Right ventricle myocardium inferior (tissue), 1 donor: ENCODE measurements at regions of chr15 and their contacts with region 1.

Region 1: DNA sequence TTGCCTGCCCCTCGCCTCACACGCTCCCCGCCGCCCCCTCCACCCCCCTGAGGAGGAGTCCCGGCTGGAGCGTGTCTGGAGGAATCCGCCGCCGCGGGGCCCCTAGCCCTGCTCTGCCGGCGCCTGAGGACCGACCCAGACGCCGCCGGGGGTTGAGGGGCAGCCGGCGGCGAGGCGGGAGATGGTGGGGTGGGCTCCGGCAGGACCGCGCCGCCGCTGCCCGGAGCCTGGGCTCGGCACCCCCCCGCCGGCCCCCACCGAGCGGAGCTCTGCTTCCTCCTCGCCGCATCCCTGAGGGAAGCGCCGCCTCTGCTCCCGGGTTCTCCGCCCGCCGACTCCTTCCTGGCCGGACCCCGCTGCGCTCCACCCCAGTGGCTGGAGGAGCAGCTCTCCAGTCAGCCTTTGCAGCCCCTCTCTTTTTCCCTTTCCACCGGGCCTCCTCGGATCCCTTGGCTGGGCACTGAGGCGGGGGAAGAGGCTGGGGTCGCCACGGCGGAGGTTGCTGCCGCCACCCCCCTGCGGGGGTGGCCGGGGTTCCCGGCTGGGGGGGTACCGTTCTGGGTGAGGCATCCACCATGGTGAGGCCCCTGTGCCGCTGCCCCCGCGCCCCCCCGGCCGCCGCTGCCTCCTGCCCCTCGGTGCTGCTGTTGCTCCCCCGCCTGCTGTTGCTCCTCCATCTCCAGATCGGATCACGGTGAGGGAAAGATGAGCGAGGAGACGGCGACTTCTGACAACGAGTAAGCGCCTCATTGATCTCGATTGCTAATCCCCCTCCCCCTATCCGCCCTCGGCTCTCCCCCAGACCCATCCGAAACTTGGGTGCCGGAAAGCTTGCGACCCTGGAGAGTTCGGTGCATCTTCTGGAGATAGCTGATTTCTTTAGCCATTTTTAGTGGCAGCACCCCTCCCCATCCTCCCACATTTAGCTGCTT is at the start of gene SPRED1:
- DNase-seq: peak; percentile 87
- ATAC-seq: peak; percentile 78
- total RNA-seq, gene SPRED1: 9.9 TPM

Region 2: GRCh38 chr15:37907136-37907535 is 345.6 kb before region 1 on chr15:
- intact Hi-C with region 1: no loop called
- DNase-seq: no peak
- ATAC-seq: no peak

Region 3: DNA sequence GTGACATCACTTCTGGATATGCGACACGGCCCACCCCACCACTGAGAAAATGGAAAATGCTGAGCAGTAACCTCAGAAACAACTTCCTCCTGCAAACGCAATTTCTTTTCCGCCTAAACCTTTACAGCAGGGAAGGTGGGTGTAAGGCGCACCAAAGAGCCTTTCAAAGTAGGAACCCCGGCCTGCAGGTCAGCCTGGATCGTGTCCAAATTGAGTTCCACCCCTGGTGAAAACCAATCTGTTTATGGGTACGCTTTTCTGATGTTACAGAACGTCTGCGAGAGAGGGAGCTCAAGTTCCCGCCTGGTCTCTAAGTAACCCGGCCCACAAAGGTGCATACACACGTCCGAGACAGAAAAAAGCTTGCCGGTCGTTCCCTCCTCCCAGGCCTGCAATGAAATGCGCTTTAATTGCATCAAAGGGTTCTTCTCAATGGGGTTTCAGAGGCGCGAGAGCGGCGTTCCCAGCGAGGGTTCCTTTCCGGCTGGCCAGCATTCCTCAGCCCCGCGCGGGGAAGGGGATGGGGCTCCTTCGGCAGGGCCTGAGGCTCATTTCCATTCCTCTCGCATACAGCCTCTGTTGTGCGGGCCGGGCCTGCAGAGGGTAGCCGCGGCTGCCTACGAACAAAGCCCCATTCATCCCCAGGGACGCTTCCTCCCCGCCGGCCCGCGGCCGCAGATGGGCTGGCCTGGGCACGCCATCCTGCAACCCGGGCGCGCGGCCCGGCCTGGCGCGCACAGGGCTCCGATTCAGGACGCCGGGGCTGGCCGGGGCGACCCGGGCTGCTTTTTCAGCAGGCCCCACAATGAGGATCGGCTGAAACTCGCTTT is 180.2 kb before region 1 on chr15:
- intact Hi-C with region 1: loop called (anchors 1 kb)
- DNase-seq: peak; percentile 86
- ATAC-seq: peak; percentile 91

Region 4: DNA sequence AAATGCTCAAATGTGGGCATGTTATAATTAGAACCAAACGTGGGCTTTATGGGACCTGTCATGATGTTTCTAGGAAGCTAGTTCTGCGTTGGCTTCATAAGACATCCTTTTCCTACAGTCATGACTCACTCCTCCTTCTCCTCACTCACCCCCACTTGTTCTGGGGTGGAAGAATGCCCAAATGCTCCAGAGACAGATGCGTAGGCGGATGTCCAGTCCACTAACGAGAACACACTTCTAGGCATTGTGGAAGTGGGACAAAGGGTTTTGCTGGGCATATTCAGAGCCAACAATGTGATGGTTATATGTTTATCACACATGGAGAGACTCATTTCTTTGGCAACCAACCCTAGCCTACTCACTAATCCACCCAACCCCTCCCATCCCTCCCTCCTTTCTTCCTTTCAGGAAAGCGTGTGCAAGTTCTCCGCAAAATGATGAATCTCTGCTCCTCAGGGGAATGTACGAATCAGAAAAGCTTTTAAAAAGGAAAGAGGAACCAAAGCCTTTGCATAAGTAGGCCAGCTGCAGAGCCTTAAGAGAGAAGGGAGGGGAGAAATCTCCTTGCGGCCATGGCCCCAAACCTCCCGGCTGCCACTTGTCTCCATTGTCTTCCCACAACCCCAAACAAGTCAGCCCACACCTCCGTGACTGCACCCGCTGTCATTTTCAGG is 123.1 kb before region 1 on chr15:
- intact Hi-C with region 1: loop called (anchors 5 kb)
- DNase-seq: peak; percentile 74
- ATAC-seq: peak; percentile 87

Region 5: GRCh38 chr15:38207621-38208020 is 45.1 kb before region 1 on chr15:
- intact Hi-C with region 1: loop called (anchors 5 kb)
- DNase-seq: no peak
- ATAC-seq: no peak

Region 6: DNA sequence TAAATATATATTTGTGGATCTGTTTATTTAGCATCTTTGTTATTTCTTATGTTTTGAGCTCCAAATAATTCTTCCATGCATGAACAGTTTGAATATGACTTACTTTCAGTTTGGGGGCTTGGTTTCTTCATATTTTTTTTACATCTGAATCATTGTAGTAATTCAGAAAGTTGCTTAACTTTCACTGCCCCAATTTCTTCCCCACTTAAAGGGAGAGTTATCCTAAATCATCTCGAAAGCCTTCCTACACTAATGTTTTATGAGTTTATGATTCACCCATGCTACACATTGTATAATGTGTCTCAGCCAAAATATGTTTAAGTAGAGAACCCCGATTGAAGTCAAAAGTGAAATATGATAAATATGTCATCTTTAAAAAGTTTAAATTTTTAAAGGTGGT is 47.6 kb after region 1 on chr15:
- intact Hi-C with region 1: loop called (anchors 5 kb)
- DNase-seq: no peak
- ATAC-seq: no peak

Region 7: GRCh38 chr15:38354315-38354929 is 101.7 kb after region 1 on chr15:
- intact Hi-C with region 1: loop called (anchors 5 kb)
- DNase-seq: no peak
- ATAC-seq: peak; percentile 56

Region 8: DNA sequence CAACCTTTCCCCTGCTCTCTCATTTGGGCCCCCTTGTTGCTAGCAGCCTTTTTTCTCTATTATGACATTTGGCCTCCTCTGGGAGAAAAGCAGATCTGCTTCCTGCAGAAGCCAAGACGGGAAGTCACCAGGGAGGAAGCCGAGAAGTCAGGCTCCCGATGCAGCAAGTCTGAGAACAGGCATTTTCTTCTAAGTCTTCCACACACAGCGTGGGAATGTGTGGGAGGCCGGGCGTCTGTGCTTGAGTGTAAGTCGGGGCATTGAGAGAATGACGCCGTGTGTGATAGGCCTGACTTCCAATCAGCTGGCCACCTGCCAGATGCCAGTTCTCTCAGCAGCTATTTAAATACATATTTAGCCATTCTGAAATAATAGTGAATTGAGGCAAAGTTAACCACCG is 125.4 kb after region 1 on chr15:
- intact Hi-C with region 1: no loop called
- DNase-seq: peak; percentile 86
- ATAC-seq: peak; percentile 84